ENCODE measurements at regions of chr21 and their contacts with region 1.

Region 1: GRCh38 chr21:15722594-15723324 is 7.0 kb upstream of the USP25 start:
- DNase-seq: no peak
- ATAC-seq: no peak
- H3K4me3 ChIP-seq: no peak overlapping the region
- H3K4me3 Mint-ChIP-seq: no peak overlapping the region
- H3K27ac ChIP-seq: no peak overlapping the region
- H3K27ac Mint-ChIP-seq: no peak overlapping the region
- H3K4me1 ChIP-seq: no peaks in the 10 kb centered on the region
- H3K4me1 Mint-ChIP-seq: no peaks in the 10 kb centered on the region
- H3K27me3 ChIP-seq: no peaks in the 10 kb centered on the region
- H3K27me3 Mint-ChIP-seq: no peaks in the 10 kb centered on the region
- CTCF ChIP-seq: no peak

Region 2: DNA sequence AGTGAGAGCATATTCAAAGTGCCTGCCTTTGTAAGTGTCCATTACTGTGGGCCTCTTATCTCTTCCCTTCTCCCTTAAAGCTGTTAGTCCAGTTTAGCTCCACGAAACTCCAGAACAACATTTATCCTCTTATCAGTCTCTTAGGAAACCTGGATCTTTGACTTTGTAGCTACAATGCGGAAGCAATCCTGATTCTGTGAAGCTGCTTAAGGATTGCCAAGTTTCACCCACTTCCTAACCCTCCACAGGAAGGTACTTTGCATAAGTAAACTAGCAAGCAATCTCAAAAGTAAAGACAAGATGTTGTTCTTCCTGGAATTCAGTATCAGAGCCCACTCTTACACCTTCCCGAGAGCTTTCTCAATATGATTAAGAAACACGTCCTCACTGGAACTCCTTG is 157.9 kb before region 1 on chr21:
- CTCF ChIA-PET with region 1: no interaction called
- POLR2A ChIA-PET with region 1: no interaction called
- intact Hi-C with region 1: no loop called
- DNase-seq: no peak
- ATAC-seq: no peak
- H3K4me3 ChIP-seq: no peak overlapping the region
- H3K4me3 Mint-ChIP-seq: no peak overlapping the region
- H3K27ac ChIP-seq: no peak overlapping the region
- H3K27ac Mint-ChIP-seq: no peak overlapping the region
- H3K4me1 ChIP-seq: no peaks in the 10 kb centered on the region
- H3K4me1 Mint-ChIP-seq: no peaks in the 10 kb centered on the region
- H3K27me3 ChIP-seq: peaks cover 0 to 15% of the 10 kb centered on the region in 2 experiments
- H3K27me3 Mint-ChIP-seq: peaks cover 22% of the 10 kb centered on the region
- CTCF ChIP-seq: no peak

Region 3: GRCh38 chr21:15667010-15667409 is 55.7 kb before region 1 on chr21:
- CTCF ChIA-PET with region 1: no interaction called
- POLR2A ChIA-PET with region 1: no interaction called
- intact Hi-C with region 1: no loop called
- DNase-seq: no peak
- ATAC-seq: no peak
- H3K4me3 ChIP-seq: no peak overlapping the region
- H3K4me3 Mint-ChIP-seq: no peak overlapping the region
- H3K27ac ChIP-seq: no peak overlapping the region
- H3K27ac Mint-ChIP-seq: no peak overlapping the region
- H3K4me1 ChIP-seq: no peaks in the 10 kb centered on the region
- H3K4me1 Mint-ChIP-seq: no peaks in the 10 kb centered on the region
- H3K27me3 ChIP-seq: no peaks in the 10 kb centered on the region
- H3K27me3 Mint-ChIP-seq: no peaks in the 10 kb centered on the region
- CTCF ChIP-seq: no peak

Region 4: DNA sequence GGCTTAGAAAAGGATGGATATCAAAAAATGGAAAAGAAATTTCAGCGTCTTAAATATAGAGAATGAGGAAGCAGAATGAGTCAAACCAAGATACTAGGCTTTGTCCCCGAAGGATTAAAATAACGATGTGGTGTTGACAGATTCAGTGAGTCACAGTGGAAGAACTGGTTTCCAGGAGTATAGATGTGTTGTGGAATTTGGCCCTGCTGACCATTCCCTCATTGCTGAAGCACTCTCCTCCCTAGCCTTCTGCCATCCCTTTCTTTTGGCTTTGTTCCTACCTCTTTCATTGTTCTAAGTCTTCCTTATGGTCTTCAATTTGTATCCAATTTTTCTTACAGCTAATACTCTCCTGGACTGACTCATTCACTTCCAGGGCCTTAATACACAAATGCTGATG is 16.1 kb before region 1 on chr21:
- CTCF ChIA-PET with region 1: no interaction called
- POLR2A ChIA-PET with region 1: no interaction called
- intact Hi-C with region 1: no loop called
- DNase-seq: no peak
- ATAC-seq: no peak
- H3K4me3 ChIP-seq: no peak overlapping the region
- H3K4me3 Mint-ChIP-seq: no peak overlapping the region
- H3K27ac ChIP-seq: no peak overlapping the region
- H3K27ac Mint-ChIP-seq: no peak overlapping the region
- H3K4me1 ChIP-seq: no peaks in the 10 kb centered on the region
- H3K4me1 Mint-ChIP-seq: no peaks in the 10 kb centered on the region
- H3K27me3 ChIP-seq: no peaks in the 10 kb centered on the region
- H3K27me3 Mint-ChIP-seq: peaks cover 4% of the 10 kb centered on the region
- CTCF ChIP-seq: no peak

Region 5: DNA sequence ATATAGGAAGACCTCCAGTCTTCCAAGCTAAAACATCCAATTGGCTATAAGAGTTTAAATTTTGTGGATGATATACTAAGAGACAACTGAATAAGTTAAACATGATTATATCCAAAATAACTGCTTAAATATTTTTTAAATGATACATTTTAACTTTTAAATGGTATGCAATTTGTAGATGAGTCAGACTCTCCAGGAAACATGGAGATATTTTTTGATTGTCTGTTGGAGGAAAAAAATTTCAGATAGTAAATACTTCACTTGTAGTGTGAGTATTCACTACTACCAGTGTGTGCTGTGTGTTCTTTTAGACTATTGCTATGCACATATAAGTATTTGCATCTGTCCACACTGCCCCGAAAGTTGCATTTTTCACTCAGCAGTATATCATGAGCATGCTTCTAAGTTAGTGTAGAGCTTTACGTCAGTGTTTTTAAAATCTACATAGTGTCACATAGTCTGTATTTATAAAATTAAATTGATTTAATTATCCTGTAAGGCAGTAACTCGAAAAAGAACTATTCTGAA is 98.2 kb after region 1 on chr21:
- CTCF ChIA-PET with region 1: no interaction called
- POLR2A ChIA-PET with region 1: no interaction called
- intact Hi-C with region 1: loop called in 1 of 2 experiments (anchors 5 kb)
- DNase-seq: no peak
- ATAC-seq: no peak
- H3K4me3 ChIP-seq: no peak overlapping the region
- H3K4me3 Mint-ChIP-seq: no peak overlapping the region
- H3K27ac ChIP-seq: no peak overlapping the region
- H3K27ac Mint-ChIP-seq: peak overlapping the region; percentile 79
- H3K4me1 ChIP-seq: peaks cover 7% of the 10 kb centered on the region
- H3K4me1 Mint-ChIP-seq: peaks cover 66% of the 10 kb centered on the region
- H3K27me3 ChIP-seq: no peaks in the 10 kb centered on the region
- H3K27me3 Mint-ChIP-seq: no peaks in the 10 kb centered on the region
- CTCF ChIP-seq: no peak

Region 6: GRCh38 chr21:16388911-16389515 is 666.3 kb after region 1 on chr21:
- CTCF ChIA-PET with region 1: no interaction called
- POLR2A ChIA-PET with region 1: no interaction called
- intact Hi-C with region 1: no loop called
- DNase-seq: no peak
- ATAC-seq: no peak
- H3K4me3 ChIP-seq: no peak overlapping the region
- H3K4me3 Mint-ChIP-seq: no peak overlapping the region
- H3K27ac ChIP-seq: no peak overlapping the region
- H3K27ac Mint-ChIP-seq: no peak overlapping the region
- H3K4me1 ChIP-seq: no peaks in the 10 kb centered on the region
- H3K4me1 Mint-ChIP-seq: no peaks in the 10 kb centered on the region
- H3K27me3 ChIP-seq: no peaks in the 10 kb centered on the region
- H3K27me3 Mint-ChIP-seq: no peaks in the 10 kb centered on the region
- CTCF ChIP-seq: no peak